Activated CD4-positive, alpha-beta T cell treated with anti-CD3 and anti-CD28 coated beads, Interleukin-2, amount 10 ng/mL, durations not matched to agents 24 days and 14 days (primary cell): ENCODE measurements at regions of chr3 and their contacts with region 1.

Region 1: GRCh38 chr3:129278439-129278970 is at the start of gene HMCES:
- DNase-seq: peak; percentile 99
- H3K4me3 Mint-ChIP-seq: peak within 1 kb of the TSS; percentile 99
- H3K27ac Mint-ChIP-seq: peak within 1 kb of the TSS; percentile 96
- H3K4me1 Mint-ChIP-seq: peaks cover 43% of the 10 kb centered on the region
- H3K27me3 Mint-ChIP-seq: no peaks in the 10 kb centered on the region
- total RNA-seq, gene HMCES: 58.3 and 62.6 TPM in 2 replicates

Region 2: GRCh38 chr3:129183569-129184395 is 94.7 kb before region 1 on chr3 and contains the start of gene CNBP:
- intact Hi-C with region 1: loop called (anchors 1 kb)
- DNase-seq: peak; percentile 98
- H3K4me3 Mint-ChIP-seq: peak within 1 kb of the TSS; percentile 96
- H3K27ac Mint-ChIP-seq: peak within 1 kb of the TSS; percentile 99
- H3K4me1 Mint-ChIP-seq: peaks cover 33% of the 10 kb centered on the region
- H3K27me3 Mint-ChIP-seq: no peaks in the 10 kb centered on the region
- total RNA-seq, gene CNBP: 422 and 430 TPM in 2 replicates

Region 3: GRCh38 chr3:129305592-129306091 is 27.1 kb after region 1 on chr3:
- intact Hi-C with region 1: loop called (anchors 2 kb)
- DNase-seq: peak; percentile 73
- H3K4me3 Mint-ChIP-seq: peak overlapping the region; percentile 52
- H3K27ac Mint-ChIP-seq: peak overlapping the region; percentile 68
- H3K4me1 Mint-ChIP-seq: peaks cover 33% of the 10 kb centered on the region
- H3K27me3 Mint-ChIP-seq: no peaks in the 10 kb centered on the region

Region 4: GRCh38 chr3:129316131-129317013 is 37.9 kb after region 1 on chr3:
- intact Hi-C with region 1: loop called (anchors 1 kb)
- DNase-seq: peak; percentile 98
- H3K4me3 Mint-ChIP-seq: peak overlapping the region; percentile 92
- H3K27ac Mint-ChIP-seq: peak overlapping the region; percentile 74
- H3K4me1 Mint-ChIP-seq: peaks cover 27% of the 10 kb centered on the region
- H3K27me3 Mint-ChIP-seq: no peaks in the 10 kb centered on the region

Region 5: DNA sequence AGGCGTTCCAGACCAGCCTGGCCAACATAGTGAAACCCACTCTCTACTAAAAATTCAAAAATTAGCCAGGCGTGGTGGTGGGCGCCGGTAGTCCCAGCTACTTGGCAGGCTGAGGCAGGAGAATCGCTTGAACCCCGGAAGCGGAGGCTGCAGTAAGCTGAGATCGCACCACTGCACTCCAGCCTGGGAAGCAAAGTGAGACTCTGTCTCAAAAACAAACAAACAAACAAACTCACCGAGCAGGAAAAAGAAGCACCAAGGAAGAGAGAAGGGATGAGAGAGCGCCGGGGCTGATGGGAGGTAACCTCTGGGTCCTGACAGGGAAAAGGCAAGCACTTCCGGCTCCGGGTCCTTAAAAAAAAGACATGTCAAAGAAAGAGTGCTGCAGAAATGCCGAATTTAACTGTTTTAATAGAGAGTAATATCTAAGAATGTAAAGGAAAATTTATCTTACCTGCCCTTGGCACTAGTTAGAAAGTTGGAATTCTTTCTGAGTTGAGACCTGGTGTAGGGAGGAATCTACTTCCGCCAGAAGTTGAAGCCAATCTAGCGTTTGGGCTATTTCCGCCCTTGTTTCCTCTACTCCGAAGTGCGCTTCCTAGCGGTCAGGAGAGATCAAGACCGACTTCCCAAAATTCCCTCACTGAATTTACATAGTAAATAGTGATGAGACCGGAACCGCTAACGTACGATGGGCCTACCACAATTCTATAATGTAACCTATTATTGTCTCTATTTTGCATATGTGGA is 120.8 kb after region 1 on chr3:
- intact Hi-C with region 1: loop called (anchors 2 kb)
- DNase-seq: peak; percentile 93
- H3K4me3 Mint-ChIP-seq: peak overlapping the region; percentile 91
- H3K27ac Mint-ChIP-seq: peak overlapping the region; percentile 92
- H3K4me1 Mint-ChIP-seq: peaks cover 31% of the 10 kb centered on the region
- H3K27me3 Mint-ChIP-seq: no peaks in the 10 kb centered on the region

Region 6: GRCh38 chr3:130662501-130662996 is 1384.0 kb after region 1 on chr3:
- intact Hi-C with region 1: no loop called
- DNase-seq: no peak
- H3K4me3 Mint-ChIP-seq: no peak overlapping the region
- H3K27ac Mint-ChIP-seq: no peak overlapping the region
- H3K4me1 Mint-ChIP-seq: no peaks in the 10 kb centered on the region
- H3K27me3 Mint-ChIP-seq: no peaks in the 10 kb centered on the region